ENCODE measurements at regions of chr3 and their contacts with region 1.

Region 1: DNA sequence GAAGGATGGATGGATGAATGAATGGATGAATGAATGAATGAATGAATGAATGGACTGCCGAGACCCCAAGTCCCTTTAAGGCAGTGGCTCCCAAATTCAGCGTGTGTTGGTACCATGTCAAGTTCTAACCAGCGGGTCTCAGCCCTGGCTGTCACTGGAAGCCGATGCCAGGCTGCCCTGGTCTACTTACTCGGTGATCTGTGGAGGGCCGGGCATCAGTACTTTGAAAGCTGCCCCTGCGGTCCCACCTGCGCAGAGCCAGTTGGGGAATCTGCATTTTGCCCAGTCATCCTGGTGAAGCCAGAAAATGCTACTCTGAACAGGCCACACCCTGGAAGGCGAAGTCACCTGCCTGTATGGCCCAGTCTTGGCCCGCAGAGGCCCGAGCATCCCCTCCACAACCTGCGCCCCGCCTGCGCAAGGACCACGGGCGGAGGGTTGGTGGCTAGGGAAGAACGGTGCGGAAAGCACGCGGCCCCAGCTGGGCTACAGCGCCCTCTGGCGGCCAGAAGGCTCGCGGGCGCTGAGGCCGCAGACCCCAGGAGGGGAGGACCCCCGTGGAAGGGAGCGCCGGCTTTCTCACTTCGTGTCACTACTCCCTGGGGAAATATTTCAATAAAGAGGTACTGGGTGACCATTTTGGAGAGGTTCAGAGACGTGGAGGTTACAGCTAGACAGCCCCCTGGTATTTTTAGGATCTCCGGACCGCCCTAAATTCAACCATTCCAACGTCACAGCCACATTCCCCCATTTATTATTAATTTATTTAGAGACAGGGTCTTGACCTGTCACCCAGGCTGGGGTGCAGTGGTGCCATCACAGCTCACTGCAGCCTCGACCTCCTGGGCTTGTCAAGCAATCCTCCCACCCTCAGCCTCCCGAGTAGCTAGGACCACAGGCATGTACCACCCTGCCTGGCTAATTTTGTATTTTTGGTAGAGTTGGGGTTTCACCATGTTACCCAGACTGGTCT is 34.9 kb downstream of the PRKCD start:
- DNase-seq: peak; percentile 83
- CTCF ChIP-seq: peak; percentile 97

Region 2: GRCh38 chr3:53130179-53131061 is 65.5 kb before region 1 on chr3 and contains the start of gene RFT1:
- CTCF ChIA-PET with region 1: interaction called, 236 read pairs
- POLR2A ChIA-PET with region 1: interaction called, 4 read pairs
- DNase-seq: peak; percentile 94
- CTCF ChIP-seq: no peak

Region 3: DNA sequence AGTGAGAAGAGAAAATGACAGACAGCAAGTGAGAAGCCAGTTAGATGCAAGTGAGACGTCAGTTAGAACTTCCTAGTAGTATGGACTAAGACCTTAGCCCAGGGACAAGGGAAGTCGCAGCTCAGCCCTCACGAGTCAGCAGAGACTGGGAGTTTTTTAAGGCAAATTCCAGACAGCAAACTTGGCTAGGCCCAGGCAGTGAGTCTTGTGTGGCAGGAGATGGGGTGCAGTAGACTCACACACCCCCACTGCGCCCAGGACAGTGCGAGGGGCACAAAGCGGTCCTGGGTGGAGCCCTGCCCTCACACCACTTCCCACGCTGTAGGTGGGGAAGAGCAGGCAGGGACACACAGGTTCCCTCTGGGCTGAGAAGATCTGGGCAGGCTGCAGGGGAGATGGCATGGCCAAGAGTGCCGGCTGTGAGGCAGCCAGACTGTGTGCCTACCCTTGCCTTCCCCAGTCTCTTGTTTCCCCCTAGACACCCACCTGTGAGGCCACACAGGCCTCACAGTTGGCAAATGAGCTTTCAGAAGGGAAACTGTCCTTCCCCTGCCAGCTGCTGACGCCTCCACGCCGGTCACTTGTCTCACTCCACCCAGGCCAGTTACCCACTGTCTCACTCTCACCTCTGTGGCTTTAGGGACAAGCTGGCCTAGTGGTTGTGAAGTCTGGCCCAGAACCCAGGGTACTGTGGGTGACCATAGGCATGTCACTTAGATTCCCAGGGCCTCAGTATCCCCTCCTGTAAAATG is 48.6 kb before region 1 on chr3:
- CTCF ChIA-PET with region 1: interaction called, 23 read pairs
- POLR2A ChIA-PET with region 1: no interaction called
- DNase-seq: no peak
- CTCF ChIP-seq: no peak

Region 4: DNA sequence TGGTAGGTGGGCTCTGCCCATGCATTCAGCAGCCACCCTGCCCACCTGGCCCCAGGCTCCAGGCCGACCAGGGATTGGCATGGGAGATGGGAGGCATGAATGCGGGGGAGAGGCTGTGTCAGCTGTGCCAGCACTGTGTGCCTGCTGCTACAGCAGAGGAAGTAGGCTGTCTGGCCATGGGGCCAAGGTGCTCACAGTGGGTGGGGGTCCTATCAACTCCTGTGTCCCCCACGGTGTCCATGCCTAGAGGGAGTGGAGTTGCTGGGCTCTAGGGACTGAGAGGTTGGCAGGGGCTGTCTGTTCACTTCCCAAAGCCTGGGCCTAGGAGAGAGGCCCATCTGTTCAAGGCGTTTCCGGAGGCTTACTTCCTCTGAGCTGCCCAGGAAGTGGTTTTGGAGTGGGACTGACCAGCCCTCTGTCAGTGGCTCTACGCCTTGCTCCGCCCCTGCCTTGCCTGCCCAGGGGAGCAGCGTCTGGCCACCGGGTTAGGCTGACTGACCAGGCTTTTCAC is 29.1 kb before region 1 on chr3:
- CTCF ChIA-PET with region 1: interaction called, 66 read pairs
- POLR2A ChIA-PET with region 1: no interaction called
- DNase-seq: no peak
- CTCF ChIP-seq: no peak

Region 5: DNA sequence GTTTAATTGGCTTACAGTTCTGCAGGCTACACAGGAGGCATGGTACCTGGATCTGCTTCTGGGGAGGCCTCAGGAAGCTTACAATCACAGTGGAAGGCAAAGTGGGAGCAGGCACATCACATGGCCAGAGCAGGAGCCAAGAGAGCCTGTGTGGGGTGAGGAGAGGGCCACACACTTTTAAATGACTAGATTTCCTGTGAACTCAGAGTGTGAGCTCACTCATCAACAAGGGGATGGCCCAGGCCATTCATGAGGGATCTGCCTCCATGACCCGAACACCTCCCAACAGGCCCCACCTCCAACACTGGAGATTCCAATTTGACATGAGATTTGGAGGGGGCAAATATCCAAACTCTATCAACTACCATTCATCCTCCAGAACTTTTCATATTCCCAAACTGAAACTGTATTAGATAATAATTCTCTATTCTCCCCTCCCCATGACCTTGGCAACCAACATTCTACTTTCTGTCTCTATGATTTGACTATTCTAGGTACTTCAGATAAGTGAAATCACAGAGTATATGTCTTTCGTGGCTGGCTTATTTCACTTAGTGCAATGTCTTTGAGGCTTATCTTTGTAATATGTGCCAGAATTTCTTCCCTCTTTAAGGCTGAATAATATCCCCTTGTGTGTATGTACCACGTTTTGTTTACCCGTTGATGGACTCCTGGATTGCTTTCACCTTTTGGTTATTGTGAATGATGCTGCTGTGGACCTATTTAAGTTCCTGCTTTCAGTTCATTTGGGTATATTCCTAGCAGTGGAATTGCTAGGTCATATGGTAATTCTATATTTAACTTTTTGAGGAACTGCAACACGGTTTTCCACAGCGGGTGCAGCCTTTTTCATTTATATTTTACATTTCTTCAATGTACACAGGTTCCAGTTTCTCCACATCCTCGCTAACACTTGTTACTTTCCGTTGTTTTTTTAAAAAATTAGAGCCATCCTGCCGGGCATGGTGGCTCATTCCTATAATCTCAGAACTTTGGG is 16.1 kb after region 1 on chr3:
- CTCF ChIA-PET with region 1: interaction called, 10 read pairs
- POLR2A ChIA-PET with region 1: no interaction called
- DNase-seq: no peak
- CTCF ChIP-seq: no peak

Region 6: DNA sequence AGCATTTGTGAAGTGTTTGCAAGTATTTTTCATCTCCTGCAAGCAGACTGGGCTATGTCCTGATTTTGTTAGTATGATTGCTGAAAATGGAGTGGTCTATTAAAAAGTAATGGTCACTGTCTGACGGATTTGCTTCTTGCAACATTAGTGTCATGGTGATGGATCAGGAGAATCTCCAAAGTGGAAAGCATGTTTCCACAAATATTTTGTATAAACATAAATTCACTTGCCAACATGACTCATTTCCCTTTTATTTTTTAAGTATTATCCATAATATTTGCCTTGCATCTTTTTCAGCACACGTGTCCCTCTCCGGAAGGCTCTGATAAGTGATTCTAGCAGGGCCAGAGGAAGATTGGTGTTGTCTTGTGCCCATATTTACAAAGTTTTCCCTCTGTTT is 899.0 kb after region 1 on chr3:
- CTCF ChIA-PET with region 1: no interaction called
- POLR2A ChIA-PET with region 1: no interaction called
- DNase-seq: no peak
- CTCF ChIP-seq: no peak

Measured in GM10248 (cell line).